MCF 10A (cell line): ENCODE measurements at regions of chr3 and their contacts with region 1.

Region 1: DNA sequence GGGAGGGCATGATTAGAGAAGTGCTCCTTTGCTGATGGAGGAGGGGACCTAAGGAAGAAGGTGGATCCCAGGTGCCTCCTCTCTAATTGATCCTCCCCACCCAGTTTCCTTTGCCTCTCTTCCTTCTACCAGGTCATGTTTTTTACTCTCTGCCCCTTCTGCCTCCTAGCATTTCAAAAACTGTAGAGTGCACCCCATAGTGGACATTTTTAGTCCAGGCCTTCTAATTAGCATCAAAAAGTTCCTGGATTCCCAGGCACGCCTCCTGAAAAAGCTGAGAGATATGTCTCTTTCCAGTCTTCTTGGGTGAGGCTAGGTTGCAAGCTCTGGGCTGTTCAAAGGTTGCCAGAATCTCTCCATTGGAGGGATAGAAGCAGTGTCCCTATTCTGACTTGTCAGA is 18.7 kb upstream of the ITGB5 start:
- DNase-seq: peak; percentile 16
- H3K4me3 Mint-ChIP-seq: no peak overlapping the region
- H3K27ac Mint-ChIP-seq: no peak overlapping the region
- H3K4me1 Mint-ChIP-seq: no peaks in the 10 kb centered on the region
- H3K27me3 Mint-ChIP-seq: peaks cover 31% of the 10 kb centered on the region
- CTCF ChIP-seq: no peak

Region 2: DNA sequence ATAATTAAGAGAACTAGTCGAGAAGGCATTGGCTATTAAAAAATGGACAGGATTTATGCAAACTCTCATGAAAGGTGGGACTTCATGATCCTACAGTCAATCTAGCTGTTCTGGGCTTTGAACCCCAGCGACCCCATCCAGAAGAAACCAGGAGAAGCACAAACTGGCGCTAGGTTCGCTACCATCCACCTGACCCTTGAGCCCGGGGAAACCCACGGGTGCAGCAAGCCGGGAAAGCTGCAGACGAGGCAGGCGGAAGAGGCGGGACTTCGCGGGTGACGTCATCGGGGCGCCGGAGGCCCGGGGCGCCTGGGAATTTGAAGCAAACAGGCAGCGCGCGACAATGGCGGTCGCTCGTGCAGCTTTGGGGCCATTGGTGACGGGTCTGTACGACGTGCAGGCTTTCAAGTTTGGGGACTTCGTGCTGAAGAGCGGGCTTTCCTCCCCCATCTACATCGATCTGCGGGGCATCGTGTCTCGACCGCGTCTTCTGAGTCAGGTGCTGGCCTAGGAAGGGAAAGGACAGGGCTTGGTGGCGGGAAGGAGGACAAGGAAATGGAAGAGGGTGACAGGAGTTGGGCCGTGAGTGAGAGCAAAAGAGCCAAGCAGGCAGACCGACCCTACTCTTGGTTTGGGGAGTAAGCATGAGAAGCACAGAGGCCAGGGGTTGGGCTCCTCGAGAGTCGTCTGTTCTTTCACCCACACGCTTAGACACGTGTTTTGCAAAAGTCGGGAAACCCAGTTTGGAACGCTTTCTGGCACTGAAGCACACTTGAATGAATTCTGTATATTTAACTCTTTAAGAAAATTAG is 175.5 kb before region 1 on chr3 and contains the start of gene UMPS:
- CTCF ChIA-PET with region 1: interaction called, 10 read pairs
- POLR2A ChIA-PET with region 1: no interaction called
- intact Hi-C with region 1: no loop called
- DNase-seq: peak; percentile 81
- H3K4me3 Mint-ChIP-seq: peak within 1 kb of the TSS; percentile 98
- H3K27ac Mint-ChIP-seq: peak within 1 kb of the TSS; percentile 98
- H3K4me1 Mint-ChIP-seq: peaks cover 20% of the 10 kb centered on the region
- H3K27me3 Mint-ChIP-seq: peaks cover 23% of the 10 kb centered on the region
- CTCF ChIP-seq: no peak
- total RNA-seq, gene UMPS: 33.4 and 49.3 TPM in 2 replicates

Region 3: GRCh38 chr3:124768812-124769211 is 137.0 kb before region 1 on chr3:
- CTCF ChIA-PET with region 1: interaction called, 263 read pairs
- POLR2A ChIA-PET with region 1: interaction called, 4 read pairs
- intact Hi-C with region 1: loop called (anchors 1 kb)
- DNase-seq: peak; percentile 56
- H3K4me3 Mint-ChIP-seq: no peak overlapping the region
- H3K27ac Mint-ChIP-seq: no peak overlapping the region
- H3K4me1 Mint-ChIP-seq: no peaks in the 10 kb centered on the region
- H3K27me3 Mint-ChIP-seq: no peaks in the 10 kb centered on the region
- CTCF ChIP-seq: peak; percentile 43

Region 4: GRCh38 chr3:124786441-124787241 is 119.2 kb before region 1 on chr3:
- CTCF ChIA-PET with region 1: interaction called, 259 read pairs
- POLR2A ChIA-PET with region 1: interaction called, 17 read pairs
- intact Hi-C with region 1: loop called (anchors 1 kb)
- DNase-seq: peak; percentile 41
- H3K4me3 Mint-ChIP-seq: no peak overlapping the region
- H3K27ac Mint-ChIP-seq: peak overlapping the region; percentile 23
- H3K4me1 Mint-ChIP-seq: peaks cover 10% of the 10 kb centered on the region
- H3K27me3 Mint-ChIP-seq: no peaks in the 10 kb centered on the region
- CTCF ChIP-seq: peak; percentile 38

Region 5: GRCh38 chr3:124887177-124887931 is 18.5 kb before region 1 on chr3 and contains the start of gene ITGB5:
- CTCF ChIA-PET with region 1: interaction called, 34 read pairs
- POLR2A ChIA-PET with region 1: interaction called, 5 read pairs
- intact Hi-C with region 1: no loop called
- DNase-seq: peak; percentile 90
- H3K4me3 Mint-ChIP-seq: peak within 1 kb of the TSS; percentile 75
- H3K27ac Mint-ChIP-seq: peak within 1 kb of the TSS; percentile 36
- H3K4me1 Mint-ChIP-seq: peaks cover 24% of the 10 kb centered on the region
- H3K27me3 Mint-ChIP-seq: no peaks in the 10 kb centered on the region
- CTCF ChIP-seq: no peak
- total RNA-seq, gene ITGB5: 100 and 101 TPM in 2 replicates

Region 6: DNA sequence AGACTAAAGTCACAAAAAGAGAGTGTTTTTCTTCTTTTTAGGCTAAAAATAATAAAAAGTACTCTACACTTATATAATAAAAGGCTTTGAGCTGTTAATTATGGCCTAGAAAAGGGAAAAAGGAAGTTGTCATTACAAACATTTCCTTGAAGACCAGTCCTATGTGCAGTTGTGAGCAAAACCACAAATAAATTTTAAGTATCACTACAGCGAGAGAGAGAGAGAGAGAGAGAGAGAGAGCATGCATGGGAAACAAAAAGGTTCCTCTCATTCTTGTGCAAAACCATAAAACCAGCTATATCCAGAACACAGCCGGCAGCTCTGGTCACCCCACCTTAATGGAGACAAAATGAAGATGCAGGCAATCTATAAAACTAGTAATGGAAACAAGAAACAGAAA is 116.3 kb after region 1 on chr3:
- CTCF ChIA-PET with region 1: no interaction called
- POLR2A ChIA-PET with region 1: no interaction called
- intact Hi-C with region 1: no loop called
- DNase-seq: no peak
- H3K4me3 Mint-ChIP-seq: no peak overlapping the region
- H3K27ac Mint-ChIP-seq: no peak overlapping the region
- H3K4me1 Mint-ChIP-seq: no peaks in the 10 kb centered on the region
- H3K27me3 Mint-ChIP-seq: no peaks in the 10 kb centered on the region
- CTCF ChIP-seq: no peak